ENCODE measurements at regions of chr3 and their contacts with region 1.

Region 1: DNA sequence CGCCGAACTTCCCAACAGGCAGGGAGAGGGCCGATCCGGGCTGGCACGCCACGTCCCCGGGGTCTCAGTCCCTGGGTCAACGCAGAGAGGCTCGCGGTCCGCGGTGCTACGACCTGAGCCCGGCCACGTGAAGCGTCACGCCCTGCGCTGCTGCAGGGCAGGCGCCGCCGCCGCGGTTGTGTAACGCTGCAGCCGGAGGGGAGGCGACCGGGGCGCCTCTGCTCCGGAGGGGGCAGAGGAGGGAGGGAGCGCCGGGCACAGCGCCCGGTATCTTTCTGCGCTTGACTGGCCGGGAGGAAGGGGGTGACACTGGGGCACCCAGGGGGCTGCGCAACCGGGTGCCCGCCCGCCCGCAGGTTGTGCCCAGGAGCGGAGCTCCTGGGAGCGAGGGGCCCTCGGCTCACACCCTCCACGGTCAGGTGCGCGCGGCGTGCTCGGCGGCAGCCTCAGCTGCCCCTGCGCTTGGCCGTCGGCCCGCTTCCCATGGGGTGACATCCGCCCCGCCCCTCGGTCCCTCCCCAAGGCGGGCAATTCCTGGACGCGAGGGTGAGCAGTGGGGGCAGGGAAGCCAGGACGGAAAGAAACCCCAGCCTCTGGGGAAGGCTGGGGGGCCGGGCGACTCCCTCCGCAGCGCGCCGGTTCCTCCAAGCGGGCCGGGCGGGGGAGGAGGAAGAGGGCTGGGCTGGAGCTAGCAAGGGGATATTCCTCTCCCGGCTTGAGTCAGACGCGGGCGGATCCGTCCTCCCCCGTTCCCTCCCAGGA is 852 bp upstream of the BHLHE40 start:
- DNase-seq: peak; percentile 100

Region 2: GRCh38 chr3:4504340-4505261 is 473.8 kb before region 1 on chr3:
- intact Hi-C with region 1: no loop called
- DNase-seq: no peak

Region 3: DNA sequence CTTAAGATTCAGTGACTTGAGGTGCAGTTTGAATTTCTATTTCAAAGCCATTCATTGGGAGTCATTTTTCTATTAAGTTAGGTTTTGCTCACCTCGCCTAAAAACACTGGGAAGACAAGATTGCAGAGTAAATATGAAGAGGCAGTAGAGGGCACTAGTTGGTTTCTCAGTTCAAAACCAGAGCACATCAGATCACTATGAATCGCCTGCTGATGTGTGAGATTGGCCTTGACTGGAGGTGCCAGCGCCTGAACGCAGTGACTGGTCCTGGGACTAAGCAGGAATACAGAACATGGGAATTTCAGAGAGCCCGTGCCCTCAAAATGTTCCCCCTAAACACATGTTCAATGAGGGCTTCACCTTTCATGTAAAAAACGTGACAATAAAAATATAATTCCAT is 256.3 kb before region 1 on chr3:
- intact Hi-C with region 1: loop called (anchors 5 to 10 kb)
- DNase-seq: no peak

Region 4: DNA sequence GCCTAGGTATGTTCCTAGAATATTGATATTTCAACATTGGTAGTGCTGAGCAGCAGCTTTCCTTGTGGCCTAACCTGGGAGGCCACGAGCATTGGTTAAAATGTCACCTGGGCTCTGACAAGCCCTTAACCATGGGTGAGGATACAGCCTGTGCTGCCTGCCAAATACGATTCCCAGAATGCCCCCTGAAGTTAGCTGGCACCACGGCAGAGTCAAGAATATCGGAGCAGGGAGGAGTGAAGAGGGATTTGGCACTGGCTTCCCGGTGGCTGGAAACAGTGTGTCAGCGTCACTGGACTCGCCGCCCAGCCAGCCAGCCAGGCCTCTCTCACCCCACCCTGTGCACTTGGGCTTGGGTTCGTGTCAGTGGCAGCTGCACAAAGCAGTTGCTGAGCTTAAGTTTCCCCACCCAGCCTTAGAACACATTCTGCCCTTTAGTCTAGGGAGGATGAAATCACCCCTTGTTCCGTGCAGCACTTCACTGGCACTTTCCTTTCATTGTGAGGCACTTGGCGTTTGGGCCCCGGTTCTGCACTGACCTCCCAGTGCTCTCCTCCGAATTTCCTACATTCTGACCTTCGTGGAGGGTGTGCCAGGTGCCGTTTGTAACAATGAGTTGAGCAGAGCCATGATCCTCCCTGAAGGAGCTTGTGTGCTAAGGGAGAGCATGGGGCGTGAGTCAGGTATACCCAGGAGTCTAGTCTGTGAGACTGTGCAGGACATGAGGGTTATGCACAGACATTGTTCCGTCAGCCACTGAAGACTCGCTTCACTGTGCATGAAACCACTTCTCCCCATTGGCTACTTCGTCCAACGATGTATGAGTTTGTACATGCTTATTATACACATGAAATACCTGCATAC is 151.9 kb before region 1 on chr3:
- intact Hi-C with region 1: loop called in 1 of 2 experiments (anchors 5 kb)
- DNase-seq: peak; percentile 97

Region 5: GRCh38 chr3:4906107-4906621 is 72.2 kb before region 1 on chr3:
- intact Hi-C with region 1: no loop called
- DNase-seq: no peak

Region 6: GRCh38 chr3:5026331-5027218 is 48.2 kb after region 1 on chr3:
- intact Hi-C with region 1: loop called in 1 of 2 experiments (anchors 5 kb)
- DNase-seq: peak; percentile 98

Region 7: GRCh38 chr3:5275529-5275928 is 297.1 kb after region 1 on chr3:
- intact Hi-C with region 1: no loop called
- DNase-seq: no peak

Measured in posterior vena cava (tissue), 2 donors.